ENCODE measurements at regions of chr17 and their contacts with region 1.

Region 1: GRCh38 chr17:50087246-50087911 is 7.8 kb upstream of the PDK2 start:
- DNase-seq: peak; percentile 97
- H3K4me3 ChIP-seq: no peak overlapping the region; a peak in 1 of 4 replicates
- H3K27ac ChIP-seq: peak overlapping the region in 1 of 2 experiments; percentile 32; a peak in 1 of 4 replicates
- H3K4me1 ChIP-seq: no peaks in the 10 kb centered on the region
- H3K27me3 ChIP-seq: no peaks in the 10 kb centered on the region
- CTCF ChIP-seq: peak; percentile 99
- EP300 ChIP-seq: no peak
- RAD21 ChIP-seq: peak; percentile 98

Region 2: GRCh38 chr17:50020841-50021599 is 66.4 kb before region 1 on chr17:
- CTCF ChIA-PET with region 1: interaction called, 353 read pairs
- POLR2A ChIA-PET with region 1: no interaction called
- DNase-seq: no peak
- H3K4me3 ChIP-seq: no peak overlapping the region
- H3K27ac ChIP-seq: no peak overlapping the region
- H3K4me1 ChIP-seq: peaks cover 0 to 2% of the 10 kb centered on the region in 2 experiments; a peak in 1 of 4 replicates
- H3K27me3 ChIP-seq: no peaks in the 10 kb centered on the region
- CTCF ChIP-seq: no peak
- EP300 ChIP-seq: no peak
- RAD21 ChIP-seq: no peak

Region 3: GRCh38 chr17:50055426-50056230 is 31.8 kb before region 1 on chr17 and contains the start of gene ITGA3:
- CTCF ChIA-PET with region 1: interaction called, 73 read pairs
- POLR2A ChIA-PET with region 1: no interaction called
- DNase-seq: peak; percentile 93
- H3K4me3 ChIP-seq: peak within 1 kb of the TSS; percentile 90 to 91
- H3K27ac ChIP-seq: peak within 1 kb of the TSS; percentile 90 to 100
- H3K4me1 ChIP-seq: peaks cover 64 to 65% of the 10 kb centered on the region in 2 experiments
- H3K27me3 ChIP-seq: no peaks in the 10 kb centered on the region
- CTCF ChIP-seq: no peak; the same call in 1 of the 2 replicates
- EP300 ChIP-seq: peak in 1 of 2 experiments; percentile 66; a peak in 1 of 4 replicates
- RAD21 ChIP-seq: peak; percentile 2; the same call in 1 of the 2 replicates
- polyA plus RNA-seq, gene ITGA3: 543 and 766 TPM in 2 replicates

Region 4: GRCh38 chr17:50101346-50102163 is 14.2 kb after region 1 on chr17:
- CTCF ChIA-PET with region 1: interaction called, 297 read pairs
- POLR2A ChIA-PET with region 1: no interaction called
- DNase-seq: peak; percentile 89
- H3K4me3 ChIP-seq: no peak overlapping the region
- H3K27ac ChIP-seq: peak overlapping the region in 1 of 2 experiments; percentile 58; a peak in 2 of 4 replicates
- H3K4me1 ChIP-seq: peaks cover 0 to 28% of the 10 kb centered on the region in 2 experiments; a peak in 1 of 4 replicates
- H3K27me3 ChIP-seq: no peaks in the 10 kb centered on the region
- CTCF ChIP-seq: no peak
- EP300 ChIP-seq: 0 out of 4 replicates have a peak, but pooled peaks of 1 of the 2 experiments have one; percentile 4
- RAD21 ChIP-seq: no peak

Region 5: DNA sequence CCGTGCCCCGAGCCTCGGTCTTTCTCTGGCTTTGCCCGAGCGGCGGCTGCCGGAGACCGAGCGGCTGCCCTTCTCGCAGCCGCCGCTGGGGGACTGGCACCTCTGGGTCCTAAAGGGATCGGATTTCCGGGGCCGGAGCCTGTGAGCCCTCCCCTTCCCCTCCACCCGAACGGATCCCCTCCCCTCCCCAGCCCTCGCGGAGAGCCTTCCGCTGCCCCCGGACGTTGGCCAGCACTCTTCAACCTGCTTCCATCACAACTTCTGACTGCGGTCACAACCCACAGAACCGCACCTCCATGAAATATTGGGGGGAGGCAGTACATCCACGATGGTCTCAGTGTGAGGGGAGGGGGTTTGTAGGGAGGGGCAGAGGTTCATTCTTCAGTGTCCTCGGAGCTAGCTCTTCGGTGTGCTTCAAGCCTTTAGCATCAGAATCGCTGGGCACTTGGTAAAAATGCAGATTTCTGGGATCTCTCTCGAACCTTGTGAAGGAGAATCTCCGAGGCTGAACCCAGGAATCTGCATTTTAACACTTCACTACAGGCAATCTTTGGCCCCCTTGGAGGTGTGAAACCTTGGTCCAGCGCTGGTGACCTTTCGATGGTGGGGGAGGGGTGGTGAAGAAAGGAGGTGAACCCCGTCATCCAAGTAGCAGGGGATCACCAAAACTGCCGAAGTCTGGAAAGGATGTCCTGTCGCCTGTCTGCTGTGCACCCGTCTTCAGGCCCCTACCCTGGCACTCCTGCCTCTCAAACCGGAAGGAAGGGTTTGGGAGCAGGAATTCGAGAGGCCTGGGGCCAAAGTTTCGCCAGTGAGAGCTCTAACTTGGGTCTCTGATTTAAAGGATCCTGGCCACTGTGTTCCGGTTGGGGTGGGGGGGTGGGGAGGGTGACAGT is 63.9 kb after region 1 on chr17:
- CTCF ChIA-PET with region 1: interaction called, 10 read pairs
- POLR2A ChIA-PET with region 1: no interaction called
- DNase-seq: peak; percentile 99
- H3K4me3 ChIP-seq: peak overlapping the region; percentile 66 to 81
- H3K27ac ChIP-seq: peak overlapping the region; percentile 74 to 98
- H3K4me1 ChIP-seq: peaks cover 39 to 60% of the 10 kb centered on the region in 2 experiments; a peak in 3 of 4 replicates
- H3K27me3 ChIP-seq: no peaks in the 10 kb centered on the region
- CTCF ChIP-seq: peak; percentile 63
- EP300 ChIP-seq: peak in 1 of 2 experiments; percentile 34; a peak in 1 of 4 replicates
- RAD21 ChIP-seq: peak; percentile 19; the same call in 1 of the 2 replicates

Region 6: DNA sequence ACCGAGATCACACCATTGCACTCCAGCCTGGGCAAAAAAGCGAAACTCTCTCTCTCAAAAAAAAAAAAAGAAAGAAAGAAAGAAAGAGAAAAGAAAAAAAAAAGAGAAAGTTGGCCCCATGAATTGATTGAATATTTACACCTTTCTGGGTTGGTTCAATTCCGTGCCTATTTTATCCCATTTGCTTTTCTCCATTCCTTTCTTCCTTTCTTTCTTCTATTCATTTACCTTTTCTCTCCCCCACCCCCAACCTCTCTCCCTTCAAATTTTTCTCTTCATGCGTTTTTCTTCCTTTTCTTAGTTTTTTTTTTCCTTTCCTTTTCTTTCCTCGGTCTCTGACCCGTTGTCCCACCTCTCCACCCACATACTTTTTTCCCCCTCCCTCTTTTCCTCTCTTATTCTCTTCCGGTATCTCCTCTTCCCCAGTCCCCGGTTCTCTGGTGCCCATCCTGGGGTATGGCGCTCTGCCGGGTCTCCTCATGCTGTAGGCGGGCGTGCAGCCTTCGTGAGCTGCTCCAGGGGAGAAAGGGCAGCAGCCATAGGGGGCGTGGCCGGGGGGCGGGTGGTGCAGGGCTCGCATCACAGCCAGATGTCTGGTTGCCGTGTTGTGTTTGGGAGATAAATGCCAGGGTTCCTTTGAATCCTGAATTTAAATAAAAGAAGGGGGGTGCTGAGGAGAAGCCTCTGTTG is 119.4 kb after region 1 on chr17:
- CTCF ChIA-PET with region 1: no interaction called
- POLR2A ChIA-PET with region 1: no interaction called
- DNase-seq: peak; percentile 97
- H3K4me3 ChIP-seq: peak overlapping the region; percentile 2 to 45; a peak in 3 of 4 replicates
- H3K27ac ChIP-seq: peak overlapping the region; percentile 97 to 100
- H3K4me1 ChIP-seq: peaks cover 65 to 86% of the 10 kb centered on the region in 2 experiments
- H3K27me3 ChIP-seq: no peaks in the 10 kb centered on the region
- CTCF ChIP-seq: no peak; the same call in 1 of the 2 replicates
- EP300 ChIP-seq: peak; percentile 15 to 76; a peak in 2 of 4 replicates
- RAD21 ChIP-seq: 0 out of 2 replicates have a peak, but pooled peaks have one; percentile 9

Region 7: GRCh38 chr17:50394711-50395110 is 307.3 kb after region 1 on chr17:
- CTCF ChIA-PET with region 1: no interaction called
- POLR2A ChIA-PET with region 1: no interaction called
- DNase-seq: no peak
- H3K4me3 ChIP-seq: peak overlapping the region in 1 of 2 experiments; percentile 91; a peak in 2 of 4 replicates
- H3K27ac ChIP-seq: no peak overlapping the region
- H3K4me1 ChIP-seq: peaks cover 10 to 23% of the 10 kb centered on the region in 2 experiments
- H3K27me3 ChIP-seq: no peaks in the 10 kb centered on the region
- CTCF ChIP-seq: no peak
- EP300 ChIP-seq: no peak
- RAD21 ChIP-seq: no peak